ACHN (cell line): ENCODE measurements at regions of chr5 and their contacts with region 1.

Region 1: GRCh38 chr5:68460147-68460798 is 244.7 kb downstream of the PIK3R1 start:
- DNase-seq: peak; percentile 62

Region 2: DNA sequence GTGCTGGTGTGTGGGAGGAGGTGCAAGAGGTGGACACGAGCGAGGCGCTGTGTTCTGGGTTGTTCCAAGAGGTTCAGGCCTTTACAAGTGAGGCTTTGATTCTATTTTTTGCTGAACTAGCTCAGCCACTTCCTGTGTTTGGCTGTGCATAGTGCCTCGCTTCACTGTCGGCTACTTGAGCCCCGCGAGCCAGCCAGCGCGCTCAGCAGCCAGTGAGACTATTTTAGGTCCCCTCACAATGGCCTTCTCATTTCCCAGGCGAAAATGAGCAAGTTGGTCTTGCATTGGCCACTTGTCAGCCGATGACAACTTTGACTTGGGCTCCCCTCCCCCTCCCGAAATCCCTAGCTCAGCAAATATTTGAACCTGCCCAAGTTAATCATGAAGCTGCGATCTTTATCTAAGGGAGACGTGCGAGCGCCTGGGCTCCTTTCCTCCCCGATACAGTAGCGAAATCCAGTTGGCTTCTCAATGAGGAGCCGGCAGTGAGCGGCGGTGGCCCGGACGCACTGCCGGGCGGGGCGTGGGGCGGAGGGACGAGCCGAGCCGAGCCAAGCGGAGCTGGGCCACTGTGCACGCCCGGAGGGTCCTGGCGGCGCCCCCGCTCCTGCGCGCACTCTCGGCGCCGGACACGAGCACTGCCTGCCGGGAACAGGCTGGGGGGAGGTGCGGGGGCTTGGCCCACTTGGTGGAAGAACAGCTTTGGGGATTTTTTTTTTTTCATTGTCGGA is 172.1 kb before region 1 on chr5:
- in situ Hi-C with region 1: loop called (anchors 25 kb)
- DNase-seq: peak; percentile 59